Psoas muscle (tissue), 8 donors: ENCODE measurements at regions of chr9 and their contacts with region 1.

Region 1: DNA sequence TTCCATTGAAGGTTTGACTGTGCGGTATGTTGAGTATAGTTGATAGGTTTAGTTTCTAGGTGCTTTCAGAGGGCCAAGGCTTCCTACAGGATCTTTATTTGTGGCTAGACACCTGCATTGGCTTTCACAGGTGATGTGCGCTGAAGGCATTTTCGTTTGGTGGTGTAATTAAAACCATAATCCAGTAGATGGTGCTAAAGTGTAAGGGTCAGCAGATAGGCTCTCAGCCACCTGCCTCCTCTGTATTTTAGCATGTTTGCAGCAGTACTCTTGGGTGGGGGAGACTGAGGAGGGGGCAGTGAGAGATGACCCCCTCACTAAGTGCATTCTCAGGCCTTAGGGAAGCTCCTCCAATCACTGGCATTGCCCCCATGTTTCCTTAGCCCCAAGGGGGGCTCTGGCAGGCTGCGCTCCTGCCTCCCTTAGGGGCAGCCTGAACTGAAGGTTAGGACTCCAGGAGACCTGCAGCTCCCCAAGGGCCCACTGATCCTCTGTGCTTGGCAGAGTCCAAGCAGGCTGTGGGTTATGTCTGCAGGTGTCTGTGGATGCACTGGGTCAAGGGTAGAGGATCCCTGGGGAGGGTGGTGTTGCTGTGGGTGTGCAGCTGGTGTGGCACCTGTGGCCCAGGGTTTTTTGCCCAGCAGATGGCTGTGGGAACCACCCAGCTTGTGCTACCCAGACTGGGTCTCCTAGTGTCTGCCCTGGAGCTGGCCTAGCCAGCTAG is 23.4 kb downstream of the CDK20 start:
- DNase-seq: no peak
- ATAC-seq: peak in 2 of 4 donors; percentile 35
- H3K4me3 ChIP-seq: no peak overlapping the region
- H3K27ac ChIP-seq: no peak overlapping the region
- H3K4me1 ChIP-seq: no peaks in the 10 kb centered on the region
- H3K27me3 ChIP-seq: no peaks in the 10 kb centered on the region
- CTCF ChIP-seq: peak; percentile 47

Region 2: GRCh38 chr9:88011005-88011766 is 60.3 kb after region 1 on chr9:
- intact Hi-C with region 1: no loop called
- DNase-seq: no peak
- ATAC-seq: no peak
- H3K4me3 ChIP-seq: no peak overlapping the region
- H3K27ac ChIP-seq: no peak overlapping the region
- H3K4me1 ChIP-seq: no peaks in the 10 kb centered on the region
- H3K27me3 ChIP-seq: no peaks in the 10 kb centered on the region
- CTCF ChIP-seq: no peak

Region 3: GRCh38 chr9:88388172-88388885 is 437.4 kb after region 1 on chr9 and contains the start of gene SPIN1:
- intact Hi-C with region 1: loop called in 1 of 2 experiments (anchors 5 kb)
- DNase-seq: peak; percentile 79 to 84
- ATAC-seq: peak; percentile 74 to 89 (median 80)
- H3K4me3 ChIP-seq: peak within 1 kb of the TSS; percentile 88
- H3K27ac ChIP-seq: peak within 1 kb of the TSS; percentile 71
- H3K4me1 ChIP-seq: no peaks in the 10 kb centered on the region
- H3K27me3 ChIP-seq: no peaks in the 10 kb centered on the region
- CTCF ChIP-seq: peak; percentile 65
- total RNA-seq, gene SPIN1: 4.1 to 17.2 (median 9.4) TPM

Region 4: DNA sequence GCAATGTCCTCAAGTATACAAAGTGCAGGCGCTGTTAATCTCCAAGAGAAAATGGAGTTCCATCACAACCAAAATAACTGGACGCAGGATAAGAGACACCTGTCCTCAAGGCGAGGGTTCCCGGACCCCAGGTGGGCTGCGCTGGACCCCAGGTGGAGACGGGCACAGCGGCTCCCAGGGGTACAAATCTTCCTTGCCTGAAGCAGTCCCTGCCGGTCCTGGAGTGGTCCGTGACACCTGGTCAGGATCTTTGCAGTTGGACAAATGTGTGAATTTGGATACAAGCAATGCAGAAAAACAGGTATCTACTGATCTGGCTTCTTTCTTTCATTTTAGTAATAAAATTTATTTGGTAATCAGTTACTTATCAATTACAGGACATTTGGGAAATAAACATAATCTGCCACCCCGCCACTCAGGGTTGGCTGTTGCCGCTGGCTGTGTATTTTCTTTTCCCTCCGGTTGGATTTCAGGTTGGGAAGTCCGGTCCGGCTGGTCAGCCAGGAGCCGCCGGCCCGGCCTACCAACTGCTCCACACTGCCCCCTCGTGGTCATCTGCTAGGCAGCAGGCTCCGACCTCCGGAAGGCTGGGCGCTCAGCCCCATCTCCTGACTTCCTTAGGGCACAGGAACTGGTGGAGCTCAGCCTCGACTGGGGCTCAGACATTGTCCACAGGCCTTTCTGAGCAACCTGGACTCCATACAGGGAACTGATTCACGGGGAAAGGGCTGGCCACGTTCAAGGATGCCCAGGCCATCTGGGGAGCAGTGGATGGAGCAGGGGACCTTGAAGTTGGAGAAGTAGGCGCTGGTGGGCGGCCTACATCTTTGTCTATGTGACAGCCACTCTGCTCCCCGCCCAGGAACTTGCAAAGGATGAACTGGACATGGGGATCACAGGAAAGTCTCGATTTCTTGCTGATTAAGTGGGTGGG is 627.5 kb after region 1 on chr9:
- intact Hi-C with region 1: loop called in 1 of 2 experiments (anchors 2 kb)
- DNase-seq: peak; percentile 75 to 86
- ATAC-seq: peak; percentile 65 to 86 (median 78)
- H3K4me3 ChIP-seq: no peak overlapping the region
- H3K27ac ChIP-seq: no peak overlapping the region
- H3K4me1 ChIP-seq: peaks cover 4% of the 10 kb centered on the region
- H3K27me3 ChIP-seq: peaks cover 0 to under 1% (median 0%) of the 10 kb centered on the region in 3 donors
- CTCF ChIP-seq: peak; percentile 92